Adrenal gland (tissue), 19 donors: ENCODE measurements at regions of chr12 and their contacts with region 1.

Region 1: DNA sequence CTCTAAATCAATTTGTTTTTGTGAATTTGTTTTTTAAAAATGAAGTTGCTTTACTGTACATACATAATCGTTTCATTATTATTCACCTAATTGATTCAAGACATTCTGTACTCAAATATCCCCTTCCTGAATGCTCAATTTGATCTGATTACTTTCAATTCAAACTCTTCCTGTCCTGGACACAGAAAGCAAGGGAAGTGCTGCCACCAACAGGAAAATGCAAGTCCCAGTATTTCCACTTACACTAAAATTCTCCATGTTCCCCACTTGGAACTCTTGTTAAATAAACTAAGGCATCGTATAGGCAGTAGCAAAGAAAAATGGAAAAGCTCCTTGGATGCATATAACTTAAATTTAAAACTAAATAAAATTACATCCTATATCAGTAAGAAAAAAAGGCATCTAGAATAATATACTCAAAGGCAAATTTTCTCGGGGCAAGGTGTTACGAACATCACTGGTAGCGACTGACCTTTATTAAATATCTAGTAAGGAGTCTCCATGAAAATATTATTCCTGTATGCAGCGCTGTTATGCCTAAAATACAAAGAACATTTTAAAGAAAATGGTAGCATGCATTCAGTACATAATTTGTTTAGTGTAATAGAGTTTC is 72.0 kb upstream of the DBX2 start:
- DNase-seq: peak in 1 of 7 donors; percentile 1
- H3K4me3 ChIP-seq: no peak overlapping the region
- H3K27ac ChIP-seq: no peak overlapping the region
- H3K4me1 ChIP-seq: no peaks in the 10 kb centered on the region
- H3K27me3 ChIP-seq: no peaks in the 10 kb centered on the region
- CTCF ChIP-seq: peak in 1 of 6 experiments; percentile 21
- POLR2A ChIP-seq: no peak

Region 2: DNA sequence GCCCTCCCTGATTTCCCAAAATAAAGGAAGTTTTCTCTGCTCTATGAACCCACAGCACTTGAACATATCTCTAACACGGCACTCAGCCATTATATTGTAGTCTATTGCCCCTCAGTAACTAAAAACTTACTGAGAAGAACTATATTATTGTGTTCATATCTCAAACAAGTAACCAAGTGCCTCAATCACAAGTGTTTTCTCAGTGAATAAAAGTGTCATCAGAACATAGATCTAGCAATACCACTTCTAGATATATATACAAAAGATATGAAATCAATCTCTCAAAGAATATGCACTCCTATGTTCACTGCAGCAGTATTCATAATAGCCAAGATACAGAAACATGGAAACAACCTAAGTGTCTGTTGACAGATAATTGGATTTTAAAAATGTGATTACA is 384.8 kb before region 1 on chr12:
- intact Hi-C with region 1: loop called in 1 of 2 experiments (anchors 10 kb)
- DNase-seq: no peak
- H3K4me3 ChIP-seq: no peak overlapping the region
- H3K27ac ChIP-seq: no peak overlapping the region
- H3K4me1 ChIP-seq: no peaks in the 10 kb centered on the region
- H3K27me3 ChIP-seq: no peaks in the 10 kb centered on the region
- CTCF ChIP-seq: no peak
- POLR2A ChIP-seq: no peak